ENCODE measurements at regions of chr13 and their contacts with region 1.

Region 1: GRCh38 chr13:94601446-94602431 is at the start of gene GPR180:
- DNase-seq: peak; percentile 96
- ATAC-seq: peak; percentile 99
- H3K4me3 ChIP-seq: peak within 1 kb of the TSS; percentile 95
- H3K27ac ChIP-seq: peak within 1 kb of the TSS; percentile 40
- H3K4me1 ChIP-seq: peaks cover 9% of the 10 kb centered on the region
- H3K27me3 ChIP-seq: no peaks in the 10 kb centered on the region
- CTCF ChIP-seq: no peak
- total RNA-seq, gene GPR180: 3.9 and 5.6 TPM in 2 replicates

Region 2: DNA sequence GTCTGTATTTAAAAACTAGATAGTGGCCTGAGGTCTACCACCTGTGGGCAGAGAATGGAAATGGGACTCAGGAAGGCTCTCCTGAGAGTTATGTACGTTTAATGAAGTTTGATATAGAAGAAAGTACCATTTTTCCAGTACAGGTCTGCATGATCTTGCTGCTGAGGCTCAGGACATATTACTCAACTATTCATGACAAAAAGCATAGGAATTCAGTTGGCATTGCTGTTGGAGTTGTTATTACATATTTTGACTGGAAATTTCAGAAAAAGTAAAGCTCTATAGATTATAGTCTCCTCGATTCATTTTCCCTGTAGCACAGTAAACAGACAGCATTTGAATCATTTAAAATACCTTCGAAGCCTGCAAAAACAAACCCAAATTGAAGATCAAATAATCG is 592.0 kb before region 1 on chr13:
- CTCF ChIA-PET with region 1: no interaction called
- POLR2A ChIA-PET with region 1: interaction called, 17 read pairs
- intact Hi-C with region 1: no loop called
- DNase-seq: peak; percentile 23
- ATAC-seq: no peak
- H3K4me3 ChIP-seq: no peak overlapping the region
- H3K27ac ChIP-seq: no peak overlapping the region
- H3K4me1 ChIP-seq: no peaks in the 10 kb centered on the region
- H3K27me3 ChIP-seq: no peaks in the 10 kb centered on the region
- CTCF ChIP-seq: no peak

Region 3: GRCh38 chr13:94549232-94550061 is 52.3 kb before region 1 on chr13:
- CTCF ChIA-PET with region 1: no interaction called
- POLR2A ChIA-PET with region 1: interaction called, 5 read pairs
- intact Hi-C with region 1: loop called (anchors 2 kb)
- DNase-seq: peak; percentile 92
- ATAC-seq: peak; percentile 86
- H3K4me3 ChIP-seq: peak overlapping the region; percentile 85
- H3K27ac ChIP-seq: peak overlapping the region; percentile 58
- H3K4me1 ChIP-seq: peaks cover 8% of the 10 kb centered on the region
- H3K27me3 ChIP-seq: no peaks in the 10 kb centered on the region
- CTCF ChIP-seq: no peak

Measured in PC-3 (cell line).